ENCODE measurements at regions of chr6 and their contacts with region 1.

Region 1: DNA sequence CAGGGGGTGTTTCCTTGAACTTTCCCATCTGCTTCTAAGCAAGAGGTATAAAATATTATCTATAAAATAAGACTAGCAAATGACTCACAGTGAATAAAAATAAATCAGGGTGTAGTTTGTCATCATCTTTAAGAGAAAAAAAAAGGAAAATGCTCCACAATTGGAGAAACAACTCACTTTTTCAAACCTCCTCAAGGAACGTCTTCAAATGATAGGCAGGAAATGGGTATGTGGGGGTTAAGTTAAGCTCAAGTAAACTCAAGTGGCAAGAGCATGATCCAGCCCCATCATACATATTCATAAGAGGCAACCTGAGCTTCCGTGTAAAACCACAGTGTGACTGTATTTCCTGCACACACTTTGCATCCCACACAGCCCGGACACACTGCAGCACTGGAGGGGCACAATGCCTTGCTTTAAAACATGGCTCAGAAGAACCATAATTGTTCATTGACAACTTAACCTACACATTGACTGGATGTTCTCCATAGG is 58.5 kb upstream of the CEP85L start:
- DNase-seq: no peak
- H3K4me3 ChIP-seq: peak overlapping the region; percentile 41 to 52 (median 44)
- H3K27ac ChIP-seq: peak overlapping the region in 3 of 4 donors; percentile 55 to 57 (median 57)
- H3K4me1 ChIP-seq: peaks cover 13 to 44% (median 33%) of the 10 kb centered on the region in 4 donors
- H3K27me3 ChIP-seq: no peaks in the 10 kb centered on the region
- CTCF ChIP-seq: no peak
- EP300 ChIP-seq: no peak
- POLR2A ChIP-seq: no peak

Region 2: GRCh38 chr6:118651282-118652050 is 58.4 kb before region 1 on chr6 and contains the start of gene CEP85L:
- intact Hi-C with region 1: loop called (anchors 5 kb)
- DNase-seq: peak; percentile 95
- H3K4me3 ChIP-seq: peak within 1 kb of the TSS; percentile 79 to 91 (median 81)
- H3K27ac ChIP-seq: peak within 1 kb of the TSS; percentile 93 to 99 (median 96)
- H3K4me1 ChIP-seq: peaks cover 15 to 24% (median 21%) of the 10 kb centered on the region in 4 donors
- H3K27me3 ChIP-seq: no peaks in the 10 kb centered on the region
- CTCF ChIP-seq: peak in 1 of 3 experiments; percentile 2
- EP300 ChIP-seq: no peak
- POLR2A ChIP-seq: peak; percentile 78
- total RNA-seq, gene CEP85L: 12.6 to 16.2 (median 13.4) TPM